ENCODE measurements at regions of chr16 and their contacts with region 1.

Region 1: DNA sequence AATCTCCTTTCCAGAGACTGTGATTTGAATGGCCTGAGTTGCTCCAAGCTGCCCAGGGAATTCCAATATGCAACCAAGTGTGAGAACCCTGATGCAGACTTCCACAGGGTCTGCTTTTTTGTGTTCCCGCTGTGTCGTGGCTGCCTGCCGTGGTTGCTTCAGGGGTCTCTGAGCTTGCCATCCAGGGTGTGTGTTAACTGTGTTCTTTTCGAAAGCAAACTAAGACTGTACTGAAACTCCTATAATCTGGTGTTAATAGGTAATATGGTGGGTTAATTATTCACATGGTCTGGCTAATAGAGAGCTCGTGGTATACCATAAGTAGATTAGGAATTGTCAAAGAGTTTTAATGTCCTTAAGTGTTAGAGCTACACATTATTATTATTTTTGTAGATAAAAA is 20.7 kb downstream of the UBN1 start:
- DNase-seq: no peak

Region 2: DNA sequence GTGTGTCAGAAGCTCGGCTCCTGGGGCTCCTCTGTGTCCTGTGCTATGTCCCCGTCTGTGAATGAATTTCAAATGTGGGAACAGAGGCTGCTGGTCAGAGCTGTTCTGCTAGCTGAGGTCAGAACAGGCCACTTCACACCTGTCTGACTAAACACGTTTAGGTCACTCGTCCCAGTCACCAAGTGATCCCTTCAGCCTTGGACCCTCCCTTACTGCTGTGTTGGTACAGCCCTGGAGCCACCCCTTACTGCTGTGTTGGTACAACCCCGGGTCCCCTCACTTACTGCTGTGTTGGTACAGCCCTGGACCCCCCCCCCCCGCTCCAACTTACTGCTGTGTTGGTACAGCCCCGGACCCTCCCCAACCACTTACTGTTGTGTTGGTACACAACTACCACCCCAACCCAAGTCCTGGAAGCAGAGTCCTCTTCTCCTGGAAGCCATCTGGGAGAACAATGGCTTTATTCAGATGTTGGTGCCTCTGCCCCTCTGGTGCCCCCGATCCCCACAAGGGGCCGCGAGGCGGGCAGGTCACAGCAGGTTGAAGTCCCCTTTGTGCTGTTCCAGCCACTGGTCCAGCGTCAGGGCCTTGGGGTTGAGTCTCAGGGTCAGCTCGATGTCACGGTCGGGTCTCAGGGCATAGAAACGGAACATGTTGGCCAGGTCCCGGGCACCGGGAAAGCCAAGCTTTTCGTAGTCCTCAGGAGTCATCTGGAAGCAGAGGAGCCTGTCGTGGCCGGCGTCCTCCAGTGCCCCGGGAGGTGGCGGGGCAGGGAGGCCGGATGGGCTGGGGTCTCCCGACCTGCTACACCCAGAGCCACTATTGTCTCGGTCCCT is 406.6 kb before region 1 on chr16:
- intact Hi-C with region 1: no loop called
- DNase-seq: no peak

Region 3: DNA sequence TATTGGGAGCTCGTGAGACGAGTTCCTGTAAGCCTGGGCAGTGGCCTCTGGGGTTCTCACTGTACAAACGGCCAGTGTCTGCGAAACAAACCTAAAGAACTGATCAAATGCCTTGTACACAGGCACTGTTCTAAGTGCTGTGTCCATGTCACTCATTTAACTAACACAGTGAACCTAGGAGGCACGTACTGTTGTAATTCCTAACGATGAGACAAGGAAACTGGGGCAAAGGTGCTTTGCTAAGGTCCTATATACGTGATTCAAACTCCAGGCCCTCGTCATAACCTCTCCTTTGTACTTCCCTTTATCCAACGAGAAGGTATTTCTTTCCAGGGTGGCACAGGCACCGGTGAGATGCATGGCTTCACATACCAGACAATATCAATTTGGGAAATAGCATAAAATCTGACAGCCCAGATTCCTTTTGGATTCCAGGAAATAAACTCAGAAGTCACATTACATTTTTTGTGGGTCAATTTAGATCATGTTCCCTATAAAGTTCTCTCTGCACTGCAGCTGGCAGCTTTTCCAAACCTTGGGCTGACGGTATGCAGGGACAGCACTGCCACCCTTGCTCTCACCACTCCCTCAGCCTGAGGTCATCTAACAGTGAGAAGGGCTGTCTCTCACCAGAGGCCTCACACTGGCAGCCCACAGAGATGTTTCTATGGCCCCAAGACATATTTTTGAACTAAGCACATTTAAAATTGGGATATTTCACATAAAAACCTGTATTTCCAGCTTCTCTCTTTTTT is 39.3 kb before region 1 on chr16:
- intact Hi-C with region 1: no loop called
- DNase-seq: peak; percentile 20

Region 4: DNA sequence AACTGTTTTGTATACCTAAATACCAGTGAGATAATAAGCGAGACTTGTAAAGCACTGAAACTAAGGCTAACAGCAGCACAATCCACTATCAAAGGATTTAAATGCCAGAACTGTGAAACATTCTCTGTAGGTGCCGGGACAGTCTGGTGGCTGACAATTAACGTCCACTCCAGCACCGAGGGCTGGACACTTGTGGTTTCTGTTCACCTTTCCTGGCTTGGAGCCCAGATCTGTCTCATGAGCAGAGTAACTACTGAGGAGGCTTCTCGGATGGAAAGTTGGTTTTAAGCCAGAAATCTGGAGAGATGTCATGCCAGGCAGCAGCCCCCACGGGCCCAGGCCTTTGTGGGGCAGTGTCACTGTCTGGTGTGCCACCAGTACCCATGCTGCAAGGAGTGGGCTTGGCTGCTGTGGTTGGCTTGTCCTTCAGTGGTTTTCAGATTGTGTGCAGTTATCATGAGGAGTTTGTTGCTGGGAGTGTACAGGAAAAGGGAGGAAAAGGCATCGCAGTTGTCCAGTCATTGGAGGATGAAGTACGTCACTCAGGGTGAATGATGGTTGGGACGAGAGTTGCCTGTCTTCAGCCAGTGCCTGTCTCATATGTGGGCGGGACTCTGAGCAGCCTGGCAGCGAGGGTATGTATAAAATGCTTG is 14.7 kb after region 1 on chr16:
- intact Hi-C with region 1: loop called in 1 of 2 experiments (anchors 1 kb)
- DNase-seq: peak; percentile 2

Region 5: GRCh38 chr16:4936991-4937781 is 69.2 kb after region 1 on chr16 and contains the start of gene PPL:
- intact Hi-C with region 1: no loop called
- DNase-seq: no peak
- total RNA-seq, gene PPL: 23.8 to 24.1 TPM

Measured in posterior vena cava (tissue), 2 donors.